ENCODE measurements at regions of chr7 and their contacts with region 1.

Region 1: DNA sequence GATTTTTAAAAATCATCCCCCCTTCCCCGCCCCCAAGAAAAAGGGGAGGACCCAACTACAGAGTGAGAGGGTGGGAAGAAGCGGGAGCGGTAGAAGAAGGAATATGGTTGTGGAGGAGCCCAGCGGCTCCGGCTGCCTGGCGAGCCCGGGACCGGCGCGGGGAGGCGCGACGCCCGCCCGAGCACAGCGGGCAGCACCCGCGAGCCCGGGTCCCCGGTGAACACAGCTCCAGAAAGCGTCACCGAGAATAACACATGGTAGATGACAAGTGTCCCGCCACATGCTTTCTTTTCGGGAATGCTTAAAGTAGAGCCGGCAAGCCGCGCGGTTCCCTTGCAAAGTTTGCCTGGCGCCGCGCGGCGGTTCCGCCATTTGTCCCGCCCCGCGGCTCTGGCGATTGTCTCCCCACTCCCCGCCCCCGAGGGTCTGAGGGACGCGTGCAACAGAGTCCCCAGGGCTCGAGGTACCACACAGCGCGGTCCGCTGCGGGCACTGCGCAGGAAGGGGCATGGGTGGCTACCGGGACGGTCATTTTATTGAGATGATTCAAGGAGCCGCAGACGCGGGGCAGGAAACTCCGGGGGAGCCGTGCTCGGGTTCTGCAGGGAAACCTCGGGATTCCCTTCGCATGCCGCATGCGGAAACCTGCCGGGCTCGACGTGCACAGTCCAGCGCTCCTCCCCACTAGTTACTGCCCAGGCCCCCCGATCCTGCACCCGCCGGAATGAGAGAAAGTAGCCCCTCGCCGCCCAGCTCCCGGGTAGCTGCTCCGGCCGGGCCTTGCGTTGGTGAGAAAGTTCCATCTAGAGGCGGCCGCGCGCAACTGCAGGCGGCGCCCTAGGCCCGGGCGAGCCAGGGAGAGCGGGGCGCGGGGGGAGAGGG is 781 bp upstream of the GRM8 start:
- DNase-seq: peak; percentile 42 to 56 (median 46)
- H3K4me3 ChIP-seq: peak overlapping the region; percentile 48 to 64
- H3K4me3 Mint-ChIP-seq: peak overlapping the region; percentile 87 to 92 (median 90)
- H3K27ac ChIP-seq: no peak overlapping the region
- H3K27ac Mint-ChIP-seq: peak overlapping the region in 2 of 7 donors; percentile 27 to 55
- H3K4me1 ChIP-seq: peaks cover 28% of the 10 kb centered on the region
- H3K4me1 Mint-ChIP-seq: peaks cover 16 to 34% (median 19%) of the 10 kb centered on the region in 4 donors
- H3K27me3 ChIP-seq: peaks cover 16% of the 10 kb centered on the region
- H3K27me3 Mint-ChIP-seq: peaks cover 39 to 47% of the 10 kb centered on the region in 2 donors

Region 2: GRCh38 chr7:126803060-126803665 is 450.4 kb before region 1 on chr7:
- CTCF ChIA-PET with region 1: interaction called, 5 read pairs
- POLR2A ChIA-PET with region 1: no interaction called
- intact Hi-C with region 1: loop called (anchors 2 kb)
- DNase-seq: peak in 4 of 5 donors; percentile 6 to 37 (median 20)
- H3K4me3 ChIP-seq: no peak overlapping the region
- H3K4me3 Mint-ChIP-seq: no peak overlapping the region
- H3K27ac ChIP-seq: no peak overlapping the region
- H3K27ac Mint-ChIP-seq: no peak overlapping the region
- H3K4me1 ChIP-seq: no peaks in the 10 kb centered on the region
- H3K4me1 Mint-ChIP-seq: no peaks in the 10 kb centered on the region
- H3K27me3 ChIP-seq: no peaks in the 10 kb centered on the region
- H3K27me3 Mint-ChIP-seq: no peaks in the 10 kb centered on the region

Region 3: GRCh38 chr7:127047521-127047920 is 206.0 kb before region 1 on chr7:
- CTCF ChIA-PET with region 1: no interaction called
- POLR2A ChIA-PET with region 1: no interaction called
- intact Hi-C with region 1: no loop called
- DNase-seq: no peak
- H3K4me3 ChIP-seq: no peak overlapping the region
- H3K4me3 Mint-ChIP-seq: no peak overlapping the region
- H3K27ac ChIP-seq: no peak overlapping the region
- H3K27ac Mint-ChIP-seq: peak overlapping the region in 1 of 7 donors; percentile 0
- H3K4me1 ChIP-seq: no peaks in the 10 kb centered on the region
- H3K4me1 Mint-ChIP-seq: no peaks in the 10 kb centered on the region
- H3K27me3 ChIP-seq: no peaks in the 10 kb centered on the region
- H3K27me3 Mint-ChIP-seq: peaks cover 0 to 3% of the 10 kb centered on the region in 2 donors

Region 4: GRCh38 chr7:127322351-127322750 is 68.8 kb after region 1 on chr7:
- CTCF ChIA-PET with region 1: interaction called, 23 read pairs
- POLR2A ChIA-PET with region 1: no interaction called
- intact Hi-C with region 1: no loop called
- DNase-seq: peak; percentile 37 to 67 (median 62)
- H3K4me3 ChIP-seq: no peak overlapping the region
- H3K4me3 Mint-ChIP-seq: peak overlapping the region; percentile 46 to 68 (median 60)
- H3K27ac ChIP-seq: no peak overlapping the region
- H3K27ac Mint-ChIP-seq: peak overlapping the region; percentile 9 to 87 (median 76)
- H3K4me1 ChIP-seq: peaks cover 25% of the 10 kb centered on the region
- H3K4me1 Mint-ChIP-seq: peaks cover 18 to 31% (median 26%) of the 10 kb centered on the region in 4 donors
- H3K27me3 ChIP-seq: no peaks in the 10 kb centered on the region
- H3K27me3 Mint-ChIP-seq: peaks cover 0 to 4% of the 10 kb centered on the region in 2 donors

Region 5: GRCh38 chr7:127347567-127348246 is 94.2 kb after region 1 on chr7:
- CTCF ChIA-PET with region 1: interaction called, 5 read pairs
- POLR2A ChIA-PET with region 1: no interaction called
- intact Hi-C with region 1: loop called (anchors 5 kb)
- DNase-seq: peak; percentile 68 to 74 (median 71)
- H3K4me3 ChIP-seq: no peak overlapping the region
- H3K4me3 Mint-ChIP-seq: peak overlapping the region; percentile 60 to 87 (median 74)
- H3K27ac ChIP-seq: no peak overlapping the region
- H3K27ac Mint-ChIP-seq: peak overlapping the region in 3 of 7 donors; percentile 19 to 58 (median 42)
- H3K4me1 ChIP-seq: peaks cover 9% of the 10 kb centered on the region
- H3K4me1 Mint-ChIP-seq: peaks cover 17 to 31% (median 20%) of the 10 kb centered on the region in 4 donors
- H3K27me3 ChIP-seq: no peaks in the 10 kb centered on the region
- H3K27me3 Mint-ChIP-seq: no peaks in the 10 kb centered on the region

Region 6: GRCh38 chr7:127447326-127447945 is 193.9 kb after region 1 on chr7:
- CTCF ChIA-PET with region 1: interaction called, 5 read pairs
- POLR2A ChIA-PET with region 1: no interaction called
- intact Hi-C with region 1: loop called (anchors 2 kb)
- DNase-seq: peak; percentile 62 to 68 (median 65)
- H3K4me3 ChIP-seq: no peak overlapping the region
- H3K4me3 Mint-ChIP-seq: no peak overlapping the region
- H3K27ac ChIP-seq: no peak overlapping the region
- H3K27ac Mint-ChIP-seq: peak overlapping the region in 1 of 7 donors; percentile 43
- H3K4me1 ChIP-seq: peaks cover 17% of the 10 kb centered on the region
- H3K4me1 Mint-ChIP-seq: peaks cover 9 to 18% (median 15%) of the 10 kb centered on the region in 4 donors
- H3K27me3 ChIP-seq: no peaks in the 10 kb centered on the region
- H3K27me3 Mint-ChIP-seq: peaks cover 7 to 10% of the 10 kb centered on the region in 2 donors

Region 7: GRCh38 chr7:127514499-127514898 is 261.0 kb after region 1 on chr7:
- CTCF ChIA-PET with region 1: interaction called, 5 read pairs
- POLR2A ChIA-PET with region 1: no interaction called
- intact Hi-C with region 1: loop called (anchors 1 kb)
- DNase-seq: peak in 4 of 5 donors; percentile 22 to 44 (median 36)
- H3K4me3 ChIP-seq: no peak overlapping the region
- H3K4me3 Mint-ChIP-seq: no peak overlapping the region
- H3K27ac ChIP-seq: no peak overlapping the region
- H3K27ac Mint-ChIP-seq: no peak overlapping the region
- H3K4me1 ChIP-seq: no peaks in the 10 kb centered on the region
- H3K4me1 Mint-ChIP-seq: no peaks in the 10 kb centered on the region
- H3K27me3 ChIP-seq: no peaks in the 10 kb centered on the region
- H3K27me3 Mint-ChIP-seq: peaks cover 27 to 28% of the 10 kb centered on the region in 2 donors

Region 8: GRCh38 chr7:127585044-127585953 is 331.8 kb after region 1 on chr7 and contains the start of gene GCC1:
- CTCF ChIA-PET with region 1: no interaction called
- POLR2A ChIA-PET with region 1: no interaction called
- intact Hi-C with region 1: loop called (anchors 5 kb)
- DNase-seq: peak; percentile 90 to 95 (median 91)
- H3K4me3 ChIP-seq: peak within 1 kb of the TSS; percentile 80 to 90
- H3K4me3 Mint-ChIP-seq: peak within 1 kb of the TSS; percentile 89 to 96 (median 92)
- H3K27ac ChIP-seq: peak within 1 kb of the TSS; percentile 89
- H3K27ac Mint-ChIP-seq: peak within 1 kb of the TSS; percentile 88 to 97 (median 95)
- H3K4me1 ChIP-seq: peaks cover 77% of the 10 kb centered on the region
- H3K4me1 Mint-ChIP-seq: peaks cover 41 to 87% (median 74%) of the 10 kb centered on the region in 4 donors
- H3K27me3 ChIP-seq: no peaks in the 10 kb centered on the region
- H3K27me3 Mint-ChIP-seq: no peaks in the 10 kb centered on the region
- total RNA-seq, gene GCC1: 29.1 to 30.0 TPM

Measured in CD4-positive, alpha-beta memory T cell (primary cell).